ENCODE measurements at regions of chr1 and their contacts with region 1.

Region 1: GRCh38 chr1:156212833-156213643 is at the start of gene PMF1:
- DNase-seq: peak; percentile 96 to 100
- ATAC-seq: peak; percentile 98
- H3K4me3 ChIP-seq: peak within 1 kb of the TSS; percentile 65
- H3K27ac ChIP-seq: peak within 1 kb of the TSS; percentile 93 to 96
- H3K4me1 ChIP-seq: peaks cover 13% of the 10 kb centered on the region; the same call in 2 of the 3 replicates
- CTCF ChIP-seq: no peak
- EP300 ChIP-seq: no peak
- POLR2A ChIP-seq: peak; percentile 67
- RAD21 ChIP-seq: no peak
- polyA plus RNA-seq, gene PMF1: 61.4 and 63.9 TPM in 2 replicates

Region 2: GRCh38 chr1:156146020-156146768 is 66.8 kb before region 1 on chr1:
- CTCF ChIA-PET with region 1: interaction called, 639 read pairs
- POLR2A ChIA-PET with region 1: interaction called, 10 read pairs
- DNase-seq: peak; percentile 76 to 85
- ATAC-seq: peak; percentile 35 to 39
- H3K4me3 ChIP-seq: no peak overlapping the region
- H3K27ac ChIP-seq: peak overlapping the region; percentile 34 to 72
- H3K4me1 ChIP-seq: peaks cover 20% of the 10 kb centered on the region
- CTCF ChIP-seq: peak; percentile 76
- EP300 ChIP-seq: no peak
- POLR2A ChIP-seq: no peak
- RAD21 ChIP-seq: peak; percentile 90 to 91

Region 3: DNA sequence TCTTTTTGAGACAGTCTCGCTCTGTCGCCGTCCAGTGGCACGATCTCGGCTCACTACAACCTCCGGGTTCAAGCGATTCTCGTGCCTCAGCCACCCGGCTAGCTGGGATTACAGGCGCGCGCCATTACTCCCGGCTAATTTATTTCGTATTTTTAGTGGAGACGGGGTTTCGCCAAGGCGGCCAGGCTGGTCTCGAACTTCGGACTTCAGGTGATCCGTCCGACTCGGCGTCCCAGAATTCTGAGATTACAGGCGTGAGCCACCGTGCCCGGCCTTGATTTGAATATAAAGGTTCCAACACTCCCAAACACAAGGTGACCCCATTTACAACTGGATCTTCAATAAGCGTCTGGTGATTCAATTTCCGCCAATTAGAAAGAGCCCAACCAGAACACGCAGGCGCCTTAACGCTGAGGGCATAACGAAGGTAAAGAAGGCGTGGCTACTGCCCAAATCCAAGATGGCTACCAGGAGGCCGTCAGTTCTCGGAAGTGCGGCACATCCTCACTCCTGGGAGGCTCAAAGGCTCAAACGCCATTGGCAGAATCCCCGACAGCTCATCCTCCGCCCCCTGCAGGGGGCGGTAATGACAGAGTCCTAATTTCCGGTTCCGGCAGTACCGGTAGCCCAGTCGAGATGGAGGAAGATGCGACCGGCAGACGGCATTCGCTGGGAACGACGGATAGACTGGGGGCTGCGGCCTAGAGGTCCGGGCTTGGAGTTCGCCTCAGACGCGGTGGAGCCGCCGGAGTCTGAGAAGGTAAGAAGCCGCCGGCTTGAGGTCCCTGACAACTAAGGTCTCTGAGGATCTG is 19.3 kb before region 1 on chr1 and contains the start of gene SLC25A44:
- CTCF ChIA-PET with region 1: interaction called, 51 read pairs
- POLR2A ChIA-PET with region 1: interaction called, 37 read pairs
- DNase-seq: peak; percentile 95 to 99
- ATAC-seq: peak; percentile 98
- H3K4me3 ChIP-seq: peak within 1 kb of the TSS; percentile 84
- H3K27ac ChIP-seq: peak within 1 kb of the TSS; percentile 88 to 89
- H3K4me1 ChIP-seq: 0 out of 3 replicates have a peak, but pooled peaks cover 9% of the 10 kb centered on the region
- CTCF ChIP-seq: no peak
- EP300 ChIP-seq: no peak
- POLR2A ChIP-seq: peak; percentile 83
- RAD21 ChIP-seq: no peak; a peak in 1 of 5 replicates
- polyA plus RNA-seq, gene SLC25A44: 30.7 and 38.8 TPM in 2 replicates

Region 4: DNA sequence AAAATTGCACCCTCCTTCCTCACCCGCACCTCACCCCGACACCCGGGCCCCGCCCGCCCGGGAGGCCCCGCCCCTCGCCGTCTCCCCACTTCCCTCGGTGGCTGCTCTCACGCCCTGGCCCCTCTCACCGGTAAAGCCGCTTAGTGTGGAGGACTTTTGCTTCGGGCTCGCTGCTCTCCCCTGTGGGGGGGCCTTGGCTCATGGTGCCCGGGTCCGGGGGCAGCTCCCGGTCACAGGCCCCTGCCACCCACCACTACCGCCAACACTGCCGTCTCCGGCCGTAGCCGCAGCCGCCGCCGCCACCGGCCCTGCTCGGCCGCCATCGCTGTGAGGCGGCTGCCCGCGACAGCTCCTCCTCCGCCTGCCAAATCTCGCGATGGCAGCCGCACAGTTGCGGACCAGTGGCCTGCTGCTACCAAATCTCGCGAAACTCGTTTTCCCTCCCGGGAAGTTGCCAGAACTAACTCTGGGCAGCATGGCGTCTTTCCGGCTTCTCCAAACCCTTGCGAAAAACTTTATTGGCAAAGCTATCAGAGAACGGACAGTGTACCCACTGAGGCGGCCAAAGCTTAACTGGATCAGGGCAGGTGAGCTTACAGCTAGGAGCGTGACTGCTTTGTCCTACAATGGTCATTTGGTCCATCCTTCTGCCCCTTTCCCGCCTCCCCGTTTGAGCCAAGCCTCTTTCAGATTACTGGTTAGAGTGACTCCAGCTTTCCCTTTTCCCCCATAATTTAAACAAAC is 69.6 kb after region 1 on chr1 and contains the start of gene SMG5:
- CTCF ChIA-PET with region 1: no interaction called
- POLR2A ChIA-PET with region 1: interaction called, 12 read pairs
- DNase-seq: peak; percentile 92 to 98
- ATAC-seq: peak; percentile 89 to 97
- H3K4me3 ChIP-seq: peak within 1 kb of the TSS; percentile 83
- H3K27ac ChIP-seq: peak within 1 kb of the TSS; percentile 90 to 95
- H3K4me1 ChIP-seq: peaks cover 21% of the 10 kb centered on the region
- CTCF ChIP-seq: no peak
- EP300 ChIP-seq: no peak
- POLR2A ChIP-seq: peak; percentile 93
- RAD21 ChIP-seq: no peak
- polyA plus RNA-seq, gene SMG5: 25.6 and 38.0 TPM in 2 replicates